ENCODE measurements at regions of chr4 and their contacts with region 1.

Region 1: DNA sequence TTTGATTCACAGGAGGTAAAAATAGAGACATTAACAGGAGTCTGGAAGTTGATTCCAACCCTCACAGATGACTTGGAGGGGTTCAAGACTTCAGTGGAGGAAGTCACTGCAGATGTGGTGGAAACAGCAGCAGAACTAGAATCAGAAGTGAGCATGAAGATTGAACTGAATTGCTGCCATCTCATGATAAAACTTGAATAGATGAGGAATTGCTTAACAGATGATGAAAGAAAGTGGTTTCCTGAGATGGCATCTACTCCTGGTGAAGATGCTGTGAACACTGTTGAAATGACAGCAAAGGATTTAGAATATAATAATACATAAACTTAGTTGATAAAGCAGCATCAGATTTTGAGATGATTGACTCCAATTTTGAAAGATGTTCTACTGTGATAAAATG is 76.5 kb downstream of the RELL1 start:
- DNase-seq: no peak
- H3K4me3 ChIP-seq: no peak overlapping the region
- H3K27ac ChIP-seq: no peak overlapping the region
- H3K4me1 ChIP-seq: no peaks in the 10 kb centered on the region
- H3K27me3 ChIP-seq: no peaks in the 10 kb centered on the region
- CTCF ChIP-seq: no peak
- EP300 ChIP-seq: no peak
- POLR2A ChIP-seq: no peak

Region 2: GRCh38 chr4:37686373-37687193 is 77.0 kb after region 1 on chr4 and contains the start of gene RELL1:
- intact Hi-C with region 1: no loop called
- DNase-seq: peak; percentile 100
- H3K4me3 ChIP-seq: peak within 1 kb of the TSS; percentile 92
- H3K27ac ChIP-seq: peak within 1 kb of the TSS; percentile 86 to 94
- H3K4me1 ChIP-seq: peaks cover 3% of the 10 kb centered on the region
- H3K27me3 ChIP-seq: no peaks in the 10 kb centered on the region
- CTCF ChIP-seq: no peak
- EP300 ChIP-seq: no peak
- POLR2A ChIP-seq: no peak
- total RNA-seq, gene RELL1: 21.3 to 31.4 (median 24.4) TPM

Region 3: GRCh38 chr4:37793562-37793961 is 183.9 kb after region 1 on chr4:
- intact Hi-C with region 1: loop called in 3 of 4 experiments (anchors 5 to 10 kb)
- DNase-seq: no peak
- H3K4me3 ChIP-seq: no peak overlapping the region
- H3K27ac ChIP-seq: no peak overlapping the region
- H3K4me1 ChIP-seq: no peaks in the 10 kb centered on the region
- H3K27me3 ChIP-seq: no peaks in the 10 kb centered on the region
- CTCF ChIP-seq: no peak
- EP300 ChIP-seq: no peak
- POLR2A ChIP-seq: no peak